ENCODE measurements at regions of chr7 and their contacts with region 1.

Region 1: DNA sequence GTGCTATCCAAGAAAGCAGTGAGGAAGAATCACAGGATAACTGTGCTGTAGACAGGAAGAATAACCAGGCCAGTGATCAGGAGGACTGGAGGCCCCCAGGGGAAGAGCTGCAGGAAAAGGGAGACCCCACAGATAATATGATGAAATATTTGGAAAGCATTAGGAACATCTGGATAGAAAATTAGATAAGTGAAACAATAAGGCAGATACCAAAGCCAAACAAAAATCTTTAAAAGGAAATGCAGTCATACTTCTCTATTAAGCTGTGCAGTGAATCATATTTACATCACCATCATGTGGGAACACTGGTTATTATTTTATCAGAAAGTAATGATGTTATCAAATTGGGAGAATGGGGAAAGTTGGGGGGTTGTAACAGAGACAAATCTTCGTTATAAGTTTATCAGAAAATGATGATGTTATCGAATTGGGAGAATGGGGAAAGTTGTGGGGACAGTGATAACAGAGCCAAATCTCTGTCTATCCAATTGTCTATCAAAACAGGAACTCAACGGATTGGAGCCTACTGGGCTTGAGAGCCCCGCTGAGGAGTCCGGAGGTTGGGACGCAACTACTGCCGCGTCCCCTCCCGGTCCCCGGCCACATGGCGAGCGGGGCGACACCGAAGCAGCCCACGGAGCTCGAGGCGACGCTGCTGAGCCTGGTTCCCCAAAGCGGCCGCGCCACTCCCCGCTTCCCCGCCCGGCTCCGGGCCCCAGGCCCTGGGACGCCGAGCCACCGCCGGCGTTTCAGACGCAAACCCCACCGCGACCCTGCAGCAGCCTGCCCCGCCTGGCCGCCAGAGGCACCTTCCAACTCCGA is 14.0 kb upstream of the RALA start:
- DNase-seq: peak; percentile 25
- ATAC-seq: peak; percentile 71
- H3K4me3 Mint-ChIP-seq: peak overlapping the region; percentile 70
- H3K27ac Mint-ChIP-seq: no peak overlapping the region
- H3K4me1 Mint-ChIP-seq: peaks cover 13% of the 10 kb centered on the region
- H3K27me3 Mint-ChIP-seq: peaks cover 27% of the 10 kb centered on the region
- CTCF ChIP-seq: no peak

Region 2: DNA sequence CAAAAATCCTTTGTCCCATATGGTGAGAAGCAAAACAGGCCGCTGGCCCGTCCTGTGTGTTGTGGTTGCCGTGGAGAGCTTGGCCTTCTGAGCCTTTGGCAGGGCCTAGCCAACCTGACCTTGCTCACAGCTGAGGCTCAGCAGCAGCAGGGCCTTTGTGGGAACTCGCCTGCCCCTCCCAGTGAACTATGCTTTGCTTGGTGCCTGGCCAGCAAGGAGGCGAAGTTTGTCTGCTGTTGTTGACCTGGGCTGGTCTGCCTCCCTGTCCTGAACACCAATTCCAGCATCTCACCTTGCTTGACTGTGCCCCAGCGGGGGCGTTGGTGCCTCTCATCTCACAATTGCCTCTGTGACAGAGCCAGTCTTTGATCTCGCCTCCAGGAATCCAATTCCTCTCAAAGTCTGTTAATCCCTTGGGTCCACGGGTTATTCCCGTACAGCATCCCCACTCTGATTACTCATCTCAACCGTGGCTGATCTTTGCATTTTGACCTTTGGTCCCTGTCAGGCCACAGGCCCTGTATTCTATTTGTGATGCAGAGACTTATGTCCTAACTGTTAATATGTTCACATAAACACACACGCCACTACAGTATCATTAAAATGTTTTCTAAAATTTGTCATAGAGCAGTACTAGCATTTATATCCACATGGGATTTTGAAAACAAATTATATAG is 1666.3 kb before region 1 on chr7:
- CTCF ChIA-PET with region 1: no interaction called
- POLR2A ChIA-PET with region 1: interaction called, 12 read pairs
- intact Hi-C with region 1: no loop called
- DNase-seq: no peak
- ATAC-seq: no peak
- H3K4me3 Mint-ChIP-seq: no peak overlapping the region
- H3K27ac Mint-ChIP-seq: no peak overlapping the region
- H3K4me1 Mint-ChIP-seq: no peaks in the 10 kb centered on the region
- H3K27me3 Mint-ChIP-seq: no peaks in the 10 kb centered on the region
- CTCF ChIP-seq: no peak

Region 3: GRCh38 chr7:39594988-39595620 is 14.2 kb before region 1 on chr7:
- CTCF ChIA-PET with region 1: no interaction called
- POLR2A ChIA-PET with region 1: no interaction called
- intact Hi-C with region 1: loop called (anchors 2 kb)
- DNase-seq: no peak
- ATAC-seq: no peak
- H3K4me3 Mint-ChIP-seq: no peak overlapping the region
- H3K27ac Mint-ChIP-seq: no peak overlapping the region
- H3K4me1 Mint-ChIP-seq: peaks cover 4% of the 10 kb centered on the region
- H3K27me3 Mint-ChIP-seq: no peaks in the 10 kb centered on the region
- CTCF ChIP-seq: no peak